Right ventricle myocardium superior (tissue), 1 donor: ENCODE measurements at regions of chr21 and their contacts with region 1.

Region 1: DNA sequence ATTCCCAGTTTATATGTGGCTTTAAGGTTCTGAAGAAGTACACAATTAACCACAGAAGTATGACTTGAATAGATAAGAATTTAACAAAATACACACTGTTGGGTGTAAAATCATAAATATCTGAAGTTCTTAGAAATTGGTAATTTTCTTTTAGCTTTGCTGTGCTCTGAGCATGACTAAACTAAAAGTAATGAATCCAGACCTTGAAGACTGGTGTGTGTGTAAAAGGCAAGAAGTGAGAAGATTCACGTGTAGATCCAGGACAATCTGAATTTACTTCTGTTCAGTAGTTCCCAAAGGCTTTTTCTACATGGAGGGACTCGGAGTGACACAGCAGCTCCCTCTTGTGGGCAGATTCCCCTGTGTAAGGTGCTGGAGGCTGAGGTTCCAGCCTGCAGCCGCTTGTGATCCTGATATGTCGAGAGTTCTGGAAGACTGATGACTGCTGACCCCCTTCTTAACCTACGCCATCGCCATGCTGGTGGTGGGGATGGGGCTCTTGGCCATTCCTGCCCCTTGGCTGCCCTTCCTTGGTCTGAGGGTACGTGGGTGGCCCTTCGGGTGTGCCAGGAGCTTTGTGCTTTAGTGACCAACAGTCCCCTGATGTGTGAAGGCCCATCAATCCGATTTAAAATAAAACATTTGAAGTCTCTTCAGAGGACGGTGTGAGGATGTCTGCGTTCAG is 62.7 kb downstream of the ADARB1 start:
- DNase-seq: peak; percentile 90
- ATAC-seq: peak; percentile 73

Region 2: DNA sequence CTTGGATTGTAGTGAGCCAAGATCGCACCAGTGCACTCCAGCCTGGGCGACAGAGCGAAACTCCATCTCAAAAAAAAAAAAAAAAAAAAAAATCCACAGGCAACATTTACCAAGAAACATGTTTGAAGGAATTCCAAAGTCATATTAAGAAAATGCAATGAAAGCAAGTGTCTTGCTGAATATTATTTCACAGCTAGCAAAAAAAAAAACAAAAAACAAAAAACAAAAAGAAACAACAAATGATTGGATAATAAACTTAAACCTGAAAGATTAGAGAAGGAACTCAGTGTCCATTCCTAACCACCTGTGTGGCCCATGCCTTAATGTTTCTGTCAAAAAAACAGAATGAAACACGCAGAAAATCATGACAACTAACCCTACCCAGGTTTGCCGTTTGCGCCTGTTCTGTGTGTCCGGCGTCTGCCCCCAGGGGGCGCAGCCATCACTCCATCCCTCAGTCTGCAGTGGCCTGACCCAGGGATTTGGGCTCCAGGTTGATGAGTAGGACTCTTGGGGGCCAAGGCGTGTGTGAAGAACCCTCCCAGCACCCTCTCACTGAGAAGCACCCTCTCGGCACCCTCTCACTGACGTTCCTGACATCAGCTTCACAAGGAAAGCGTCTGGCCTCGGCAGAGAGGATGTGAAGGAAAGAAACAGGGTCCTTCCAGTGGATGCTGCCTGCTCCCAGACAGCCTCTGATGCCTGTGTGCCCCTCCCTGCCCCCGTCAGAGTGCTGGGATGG is 244.4 kb before region 1 on chr21:
- intact Hi-C with region 1: loop called (anchors 5 kb)
- DNase-seq: peak; percentile 85
- ATAC-seq: peak; percentile 80

Region 3: GRCh38 chr21:44949779-44950198 is 187.3 kb before region 1 on chr21:
- intact Hi-C with region 1: loop called (anchors 2 kb)
- DNase-seq: peak; percentile 94
- ATAC-seq: peak; percentile 64